ENCODE measurements at regions of chr3 and their contacts with region 1.

Region 1: DNA sequence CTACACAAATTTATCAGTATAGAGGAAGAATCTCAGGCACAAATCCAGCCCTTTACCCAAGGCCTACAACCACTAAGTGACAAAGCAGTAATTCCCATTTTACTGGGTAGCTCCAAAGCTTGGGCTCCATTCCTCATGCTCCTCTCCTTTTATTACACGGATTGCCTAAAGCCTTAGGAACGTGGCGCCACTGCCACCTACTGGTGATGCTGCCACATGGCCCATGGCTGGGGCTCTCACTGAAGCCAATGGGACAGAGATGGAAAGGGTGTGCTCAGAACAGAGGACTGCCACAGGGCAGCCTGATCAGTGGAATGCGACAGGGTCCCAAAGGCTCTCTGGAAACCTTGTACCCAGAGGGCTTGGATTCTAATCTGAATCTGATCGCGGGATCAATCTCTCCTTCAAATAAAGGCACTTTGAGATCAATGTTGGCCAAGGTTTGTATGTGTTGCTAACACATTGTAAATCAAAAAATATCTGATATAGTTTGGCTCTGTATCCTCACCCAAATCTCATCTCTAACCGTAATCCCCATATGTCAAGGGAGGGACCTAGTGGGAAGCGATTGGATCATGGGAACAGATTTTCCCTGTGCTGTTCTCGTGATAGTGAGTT is 33.5 kb upstream of the LYZL4 start:
- DNase-seq: peak; percentile 75 to 87
- ATAC-seq: peak; percentile 92 to 98 (median 95)
- H3K4me3 ChIP-seq: no peak overlapping the region
- H3K27ac ChIP-seq: no peak overlapping the region
- H3K4me1 ChIP-seq: no peaks in the 10 kb centered on the region
- H3K27me3 ChIP-seq: peaks cover 0 to 7% (median 0%) of the 10 kb centered on the region in 7 donors
- CTCF ChIP-seq: peak; percentile 91 to 99 (median 97)

Region 2: GRCh38 chr3:41893977-41894376 is 550.0 kb before region 1 on chr3:
- intact Hi-C with region 1: loop called in 8 of 10 experiments (anchors 5 to 10 kb)
- DNase-seq: peak in 1 of 2 donors; percentile 22
- ATAC-seq: no peak
- H3K4me3 ChIP-seq: no peak overlapping the region
- H3K27ac ChIP-seq: no peak overlapping the region
- H3K4me1 ChIP-seq: peaks cover 0 to 13% (median 0%) of the 10 kb centered on the region in 9 donors
- H3K27me3 ChIP-seq: no peaks in the 10 kb centered on the region
- CTCF ChIP-seq: peak in 8 of 9 donors; percentile 33 to 73 (median 60)

Region 3: GRCh38 chr3:42118762-42119361 is 325.1 kb before region 1 on chr3:
- intact Hi-C with region 1: loop called in 1 of 10 experiments (anchors 10 kb)
- DNase-seq: no peak
- ATAC-seq: peak; percentile 24 to 70 (median 53)
- H3K4me3 ChIP-seq: no peak overlapping the region
- H3K27ac ChIP-seq: peak overlapping the region in 6 of 10 donors; percentile 9 to 71 (median 49)
- H3K4me1 ChIP-seq: peaks cover 49 to 99% (median 85%) of the 10 kb centered on the region in 9 donors
- H3K27me3 ChIP-seq: no peaks in the 10 kb centered on the region
- CTCF ChIP-seq: peak in 7 of 9 donors; percentile 34 to 54 (median 47)

Region 4: GRCh38 chr3:42247576-42248027 is 196.3 kb before region 1 on chr3:
- intact Hi-C with region 1: loop called (anchors 1 to 5 kb)
- DNase-seq: peak in 1 of 2 donors; percentile 57
- ATAC-seq: peak in 6 of 8 donors; percentile 29 to 72 (median 50)
- H3K4me3 ChIP-seq: no peak overlapping the region
- H3K27ac ChIP-seq: no peak overlapping the region
- H3K4me1 ChIP-seq: peaks cover 0 to 7% (median 0%) of the 10 kb centered on the region in 9 donors
- H3K27me3 ChIP-seq: peaks cover 0 to 33% (median 15%) of the 10 kb centered on the region in 7 donors
- CTCF ChIP-seq: peak; percentile 44 to 86 (median 76)

Region 5: GRCh38 chr3:42351207-42351606 is 92.7 kb before region 1 on chr3:
- intact Hi-C with region 1: no loop called
- DNase-seq: no peak
- ATAC-seq: peak in 1 of 8 donors; percentile 14
- H3K4me3 ChIP-seq: no peak overlapping the region
- H3K27ac ChIP-seq: no peak overlapping the region
- H3K4me1 ChIP-seq: no peaks in the 10 kb centered on the region
- H3K27me3 ChIP-seq: peaks cover 0 to 17% (median 2%) of the 10 kb centered on the region in 7 donors
- CTCF ChIP-seq: no peak

Region 6: GRCh38 chr3:42547401-42547945 is 103.5 kb after region 1 on chr3:
- intact Hi-C with region 1: loop called in 1 of 10 experiments (anchors 10 kb)
- DNase-seq: peak; percentile 61 to 74
- ATAC-seq: peak; percentile 35 to 81 (median 61)
- H3K4me3 ChIP-seq: no peak overlapping the region
- H3K27ac ChIP-seq: peak overlapping the region in 4 of 10 donors; percentile 9 to 58 (median 30)
- H3K4me1 ChIP-seq: peaks cover 0 to 42% (median 13%) of the 10 kb centered on the region in 9 donors
- H3K27me3 ChIP-seq: no peaks in the 10 kb centered on the region
- CTCF ChIP-seq: peak; percentile 92 to 99 (median 97)